Posterior cingulate gyrus (tissue), 11 donors: ENCODE measurements at regions of chr1 and their contacts with region 1.

Region 1: GRCh38 chr1:84620720-84621313 is 46.6 kb upstream of the CTBS start:
- DNase-seq: peak; percentile 41 to 97 (median 76)

Region 2: DNA sequence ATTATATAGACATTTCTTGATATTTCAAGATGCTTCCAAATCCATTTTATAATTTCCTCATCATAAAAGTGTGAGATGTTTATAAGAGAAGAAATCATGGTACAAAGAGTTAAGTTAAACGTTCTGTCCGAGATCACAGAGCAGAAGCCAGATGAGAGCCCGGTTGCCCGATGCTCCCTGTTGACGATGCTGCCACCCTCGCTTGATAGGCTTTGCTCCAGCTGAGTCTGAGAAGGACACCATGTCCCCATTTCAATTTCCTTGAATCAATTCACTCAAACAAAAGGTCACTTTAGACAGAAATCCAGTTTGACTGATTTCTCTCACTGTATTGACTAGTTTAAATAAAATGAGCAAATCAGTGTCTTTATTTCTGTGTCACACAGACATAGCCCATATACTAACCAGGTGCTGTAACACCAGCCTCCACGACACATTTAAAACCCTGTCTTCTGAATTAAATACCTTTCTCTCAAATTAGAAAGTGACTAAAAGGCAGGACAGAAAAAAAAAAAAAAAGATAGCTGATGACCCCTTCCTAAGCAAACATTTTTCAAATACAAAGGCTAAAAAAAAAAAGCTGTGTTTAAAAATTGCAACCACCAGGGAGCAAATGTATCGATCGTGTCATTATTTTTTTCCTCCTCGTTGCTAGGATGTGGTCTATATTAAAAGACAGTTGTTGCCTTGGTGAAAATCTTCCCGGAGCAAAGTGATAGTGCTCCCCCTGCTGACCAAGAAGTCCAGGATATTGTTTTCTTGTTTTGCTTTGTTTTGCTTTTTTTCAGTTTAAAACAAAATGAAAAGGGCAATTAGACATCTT is 187.3 kb before region 1 on chr1:
- intact Hi-C with region 1: loop called (anchors 2 kb)
- DNase-seq: peak in 8 of 10 donors; percentile 33 to 87 (median 61)

Region 3: DNA sequence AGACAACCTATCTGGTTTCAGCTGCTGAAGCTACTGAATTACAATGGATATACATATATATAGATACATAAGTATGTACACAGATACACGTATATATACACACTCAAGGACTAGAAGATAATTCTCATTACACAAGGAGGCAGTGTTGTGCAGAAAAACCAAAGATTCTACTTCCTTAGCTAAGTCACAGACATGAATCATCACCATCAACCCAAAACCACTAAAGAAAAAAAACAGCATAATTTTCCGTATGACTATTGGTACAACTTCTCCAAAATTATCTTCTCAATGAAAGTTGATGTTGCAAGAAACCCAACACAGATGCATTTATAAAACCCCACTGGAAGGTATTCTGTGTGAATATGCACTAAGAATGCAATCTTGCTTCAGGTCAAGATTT is 178.6 kb before region 1 on chr1:
- intact Hi-C with region 1: loop called (anchors 2 kb)
- DNase-seq: no peak

Region 4: DNA sequence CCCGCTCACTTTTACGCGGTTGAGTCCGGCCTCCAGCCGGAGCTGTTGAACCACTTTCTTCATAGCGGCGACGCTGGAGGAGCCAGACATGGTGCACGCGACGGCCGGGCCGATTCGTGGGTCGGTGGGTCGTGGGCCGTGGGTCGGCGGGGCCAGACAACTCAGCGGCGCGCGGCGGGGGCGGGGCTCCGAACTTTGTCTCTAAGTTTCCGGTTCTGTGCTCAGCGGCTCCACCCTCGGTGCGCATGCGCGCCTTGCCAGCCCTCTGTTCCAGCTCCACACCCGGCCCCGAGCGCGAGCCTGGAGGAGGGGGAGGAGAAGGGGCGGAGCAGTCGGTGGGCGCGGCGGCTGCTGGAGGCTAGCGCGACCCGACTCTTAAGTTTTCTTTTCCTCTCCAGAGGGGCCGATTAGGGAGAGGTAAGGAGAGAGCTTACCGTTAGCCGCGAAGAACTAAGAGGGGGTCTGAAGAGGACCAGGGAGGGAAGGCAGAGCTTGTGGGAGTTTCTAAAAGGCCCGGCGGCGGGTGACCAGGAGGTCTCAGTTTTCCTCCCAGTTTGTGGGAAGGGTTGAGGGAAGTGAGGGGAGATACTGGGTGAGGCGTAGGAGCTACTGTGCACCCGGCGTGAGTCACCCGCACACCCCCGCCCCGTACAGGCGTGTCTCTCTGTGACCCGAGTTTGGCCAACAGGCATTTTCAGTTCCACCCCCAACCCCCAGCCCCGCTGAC is 114.7 kb before region 1 on chr1 and contains the starts of genes GNG5 and SPATA1:
- intact Hi-C with region 1: loop called (anchors 2 kb)
- DNase-seq: peak; percentile 92 to 99 (median 94)

Region 5: GRCh38 chr1:84677415-84678099 is 56.7 kb after region 1 on chr1:
- intact Hi-C with region 1: no loop called
- DNase-seq: no peak

Region 6: GRCh38 chr1:84689514-84690396 is 68.9 kb after region 1 on chr1:
- intact Hi-C with region 1: loop called (anchors 5 kb)
- DNase-seq: peak; percentile 59 to 95 (median 72)

Region 7: GRCh38 chr1:84753516-84754385 is 132.9 kb after region 1 on chr1:
- intact Hi-C with region 1: loop called (anchors 5 kb)
- DNase-seq: peak; percentile 66 to 97 (median 84)